ENCODE measurements at regions of chr14 and their contacts with region 1.

Region 1: DNA sequence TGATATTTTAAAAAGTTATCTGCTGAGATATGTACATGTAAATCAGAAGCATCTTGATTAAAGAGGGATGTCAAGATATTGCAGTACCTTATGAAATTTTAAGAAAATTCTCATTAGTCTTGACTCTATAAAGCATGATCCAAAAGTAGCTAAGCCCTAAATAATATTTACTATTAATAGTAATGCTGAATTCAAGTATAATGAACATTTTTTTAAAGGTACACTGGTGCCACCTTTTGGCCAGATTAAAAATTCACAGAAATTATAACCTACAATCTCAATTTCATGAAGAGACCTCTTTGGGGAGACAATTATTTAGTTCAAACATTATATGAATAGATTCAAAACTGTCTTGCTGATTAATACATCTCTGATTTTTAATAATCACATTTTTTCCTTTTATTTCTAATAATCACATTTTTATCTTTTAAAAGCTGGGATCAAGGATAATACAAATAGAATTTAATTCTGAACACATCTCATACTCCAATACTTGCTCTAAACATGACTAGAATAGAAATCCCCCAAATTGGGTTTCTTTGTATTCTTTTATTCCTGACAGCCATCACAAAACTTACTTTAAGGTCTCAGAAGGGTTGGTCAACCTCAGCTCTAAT is 13.4 kb downstream of the AKAP5 start:
- DNase-seq: peak in 5 of 9 donors; percentile 18 to 38 (median 32)
- ATAC-seq: peak; percentile 51
- H3K4me3 ChIP-seq: no peak overlapping the region
- H3K4me3 Mint-ChIP-seq: no peak overlapping the region
- H3K27ac ChIP-seq: no peak overlapping the region
- H3K27ac Mint-ChIP-seq: peak overlapping the region in 1 of 9 donors; percentile 55
- H3K4me1 ChIP-seq: no peaks in the 10 kb centered on the region
- H3K4me1 Mint-ChIP-seq: peaks cover 0 to 22% (median 9%) of the 10 kb centered on the region in 7 donors
- H3K27me3 ChIP-seq: no peaks in the 10 kb centered on the region
- H3K27me3 Mint-ChIP-seq: no peaks in the 10 kb centered on the region

Region 2: GRCh38 chr14:64303471-64303917 is 175.2 kb before region 1 on chr14:
- CTCF ChIA-PET with region 1: interaction called, 4 read pairs
- POLR2A ChIA-PET with region 1: no interaction called
- intact Hi-C with region 1: loop called in 1 of 2 experiments (anchors 1 kb)
- DNase-seq: peak in 6 of 9 donors; percentile 10 to 58 (median 48)
- ATAC-seq: peak; percentile 79
- H3K4me3 ChIP-seq: no peak overlapping the region
- H3K4me3 Mint-ChIP-seq: no peak overlapping the region
- H3K27ac ChIP-seq: no peak overlapping the region
- H3K27ac Mint-ChIP-seq: no peak overlapping the region
- H3K4me1 ChIP-seq: no peaks in the 10 kb centered on the region
- H3K4me1 Mint-ChIP-seq: peaks cover 0 to 6% (median 3%) of the 10 kb centered on the region in 7 donors
- H3K27me3 ChIP-seq: no peaks in the 10 kb centered on the region
- H3K27me3 Mint-ChIP-seq: peaks cover 0 to 10% (median 4%) of the 10 kb centered on the region in 5 donors

Region 3: DNA sequence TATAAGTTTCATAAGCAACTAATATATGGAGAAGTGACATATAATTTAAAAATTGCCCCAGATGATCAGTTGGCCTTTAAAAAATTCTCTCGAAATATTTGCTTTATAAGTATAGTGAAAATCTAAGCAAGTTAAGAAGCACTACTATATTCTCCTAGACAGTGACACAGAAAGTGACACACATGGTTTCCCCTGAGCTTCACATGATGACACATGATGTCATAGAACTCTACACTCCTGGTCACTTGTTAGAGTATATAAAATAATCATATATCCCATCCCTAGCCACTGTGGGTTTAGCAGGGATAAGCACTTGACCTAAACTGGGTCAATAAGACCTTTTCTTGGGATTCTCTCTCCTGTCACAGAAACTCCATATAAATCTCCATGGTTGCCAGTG is 133.2 kb before region 1 on chr14:
- CTCF ChIA-PET with region 1: interaction called, 12 read pairs
- POLR2A ChIA-PET with region 1: no interaction called
- intact Hi-C with region 1: loop called (anchors 1 kb)
- DNase-seq: no peak
- ATAC-seq: no peak
- H3K4me3 ChIP-seq: no peak overlapping the region
- H3K4me3 Mint-ChIP-seq: no peak overlapping the region
- H3K27ac ChIP-seq: no peak overlapping the region
- H3K27ac Mint-ChIP-seq: no peak overlapping the region
- H3K4me1 ChIP-seq: no peaks in the 10 kb centered on the region
- H3K4me1 Mint-ChIP-seq: peaks cover 0 to 5% (median 0%) of the 10 kb centered on the region in 7 donors
- H3K27me3 ChIP-seq: no peaks in the 10 kb centered on the region
- H3K27me3 Mint-ChIP-seq: no peaks in the 10 kb centered on the region

Region 4: DNA sequence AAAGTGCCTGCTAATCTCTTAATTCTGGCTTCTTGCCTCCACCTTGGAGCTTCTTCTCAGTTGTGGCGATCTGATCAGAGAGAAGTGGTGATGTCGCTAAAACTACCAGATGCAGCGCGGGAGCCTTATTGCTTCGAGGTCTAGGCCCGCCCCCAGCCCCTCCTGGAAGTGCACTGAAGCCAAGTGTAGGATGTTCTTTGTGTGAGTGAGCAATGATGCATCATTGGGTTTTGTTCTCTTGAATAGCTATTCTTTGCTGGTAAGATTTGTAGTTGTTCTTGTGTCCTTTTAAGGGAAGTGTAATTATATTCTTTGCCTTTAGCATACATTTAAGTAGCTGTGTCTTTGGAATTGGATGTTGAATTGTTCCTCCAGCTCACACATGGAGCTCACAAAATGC is 54.8 kb before region 1 on chr14:
- CTCF ChIA-PET with region 1: interaction called, 18 read pairs
- POLR2A ChIA-PET with region 1: no interaction called
- intact Hi-C with region 1: no loop called
- DNase-seq: no peak
- ATAC-seq: no peak
- H3K4me3 ChIP-seq: no peak overlapping the region
- H3K4me3 Mint-ChIP-seq: no peak overlapping the region
- H3K27ac ChIP-seq: no peak overlapping the region
- H3K27ac Mint-ChIP-seq: no peak overlapping the region
- H3K4me1 ChIP-seq: no peaks in the 10 kb centered on the region
- H3K4me1 Mint-ChIP-seq: peaks cover 0 to 4% (median 0%) of the 10 kb centered on the region in 7 donors
- H3K27me3 ChIP-seq: no peaks in the 10 kb centered on the region
- H3K27me3 Mint-ChIP-seq: no peaks in the 10 kb centered on the region

Region 5: GRCh38 chr14:64434528-64434927 is 44.2 kb before region 1 on chr14:
- CTCF ChIA-PET with region 1: interaction called, 18 read pairs
- POLR2A ChIA-PET with region 1: interaction called, 3 read pairs
- intact Hi-C with region 1: loop called in 1 of 2 experiments (anchors 1 kb)
- DNase-seq: no peak
- ATAC-seq: no peak
- H3K4me3 ChIP-seq: no peak overlapping the region
- H3K4me3 Mint-ChIP-seq: no peak overlapping the region
- H3K27ac ChIP-seq: no peak overlapping the region
- H3K27ac Mint-ChIP-seq: no peak overlapping the region
- H3K4me1 ChIP-seq: no peaks in the 10 kb centered on the region
- H3K4me1 Mint-ChIP-seq: peaks cover 0 to 18% (median 0%) of the 10 kb centered on the region in 7 donors
- H3K27me3 ChIP-seq: no peaks in the 10 kb centered on the region
- H3K27me3 Mint-ChIP-seq: no peaks in the 10 kb centered on the region

Region 6: DNA sequence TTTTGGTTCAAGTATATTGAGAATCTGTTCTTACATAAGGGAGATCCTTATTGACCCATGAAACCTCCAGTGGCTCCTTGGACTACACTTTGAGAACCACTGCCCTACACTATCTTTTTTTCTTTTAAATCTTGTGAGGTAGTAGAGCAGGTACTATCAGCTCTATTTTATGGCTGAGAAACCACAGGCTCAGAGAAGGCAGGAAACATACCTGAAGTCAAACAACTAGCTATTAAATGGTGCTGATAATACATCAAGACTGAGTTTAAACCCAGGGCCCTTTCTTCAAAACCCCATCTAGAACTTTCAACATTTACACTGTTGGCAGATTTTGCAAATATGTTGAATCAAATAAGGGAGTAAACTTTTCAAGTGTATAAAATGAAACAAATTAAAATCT is 18.0 kb after region 1 on chr14:
- CTCF ChIA-PET with region 1: interaction called, 13 read pairs
- POLR2A ChIA-PET with region 1: interaction called, 157 read pairs
- intact Hi-C with region 1: no loop called
- DNase-seq: peak in 1 of 9 donors; percentile 17
- ATAC-seq: no peak
- H3K4me3 ChIP-seq: no peak overlapping the region
- H3K4me3 Mint-ChIP-seq: peak overlapping the region in 8 of 10 donors; percentile 37 to 77 (median 66)
- H3K27ac ChIP-seq: peak overlapping the region; percentile 4
- H3K27ac Mint-ChIP-seq: peak overlapping the region in 8 of 9 donors; percentile 43 to 86 (median 77)
- H3K4me1 ChIP-seq: peaks cover 31 to 57% of the 10 kb centered on the region in 2 donors
- H3K4me1 Mint-ChIP-seq: peaks cover 59 to 88% (median 71%) of the 10 kb centered on the region in 7 donors
- H3K27me3 ChIP-seq: no peaks in the 10 kb centered on the region
- H3K27me3 Mint-ChIP-seq: no peaks in the 10 kb centered on the region

Region 7: DNA sequence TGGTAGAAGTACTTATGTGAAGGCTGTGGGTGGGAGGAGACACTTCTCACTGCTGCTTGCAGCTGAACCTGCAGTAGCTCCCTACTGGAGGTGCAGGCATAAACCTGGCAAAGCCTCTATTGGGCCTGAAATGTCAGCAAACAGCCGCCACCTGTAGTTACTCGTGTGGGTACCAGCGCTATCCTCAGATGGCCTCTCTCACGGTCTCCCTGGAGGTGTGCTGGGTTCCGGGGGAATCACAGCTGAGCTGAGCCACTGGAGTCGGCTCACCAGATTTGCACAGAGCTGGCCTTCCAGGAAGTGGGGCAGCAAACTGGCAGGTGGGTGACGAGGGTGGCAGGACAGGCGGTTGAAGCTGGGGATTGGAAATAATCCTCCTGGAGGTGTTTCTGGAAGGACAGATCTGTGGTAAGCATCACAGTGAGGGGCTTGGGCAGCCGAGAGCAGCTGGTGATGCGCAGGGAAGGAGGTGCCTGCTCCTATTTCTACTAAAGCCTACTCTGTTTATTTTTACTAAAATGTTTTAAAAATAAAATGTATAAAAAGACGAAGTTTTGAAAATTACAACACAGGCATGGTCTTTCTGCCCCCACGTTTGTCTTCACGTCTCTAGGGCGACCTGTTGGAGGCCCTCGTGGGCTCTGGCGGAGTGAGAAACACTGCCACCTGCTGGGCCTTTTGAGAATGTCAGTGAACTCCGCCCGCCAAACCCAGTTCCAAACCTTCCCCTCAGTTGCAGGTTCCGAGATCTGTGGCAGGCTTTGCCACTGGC is 157.7 kb after region 1 on chr14:
- CTCF ChIA-PET with region 1: interaction called, 5 read pairs
- POLR2A ChIA-PET with region 1: no interaction called
- intact Hi-C with region 1: loop called in 1 of 2 experiments (anchors 2 kb)
- DNase-seq: peak; percentile 37 to 73 (median 61)
- ATAC-seq: peak; percentile 90
- H3K4me3 ChIP-seq: no peak overlapping the region
- H3K4me3 Mint-ChIP-seq: no peak overlapping the region
- H3K27ac ChIP-seq: no peak overlapping the region
- H3K27ac Mint-ChIP-seq: peak overlapping the region in 1 of 9 donors; percentile 20
- H3K4me1 ChIP-seq: no peaks in the 10 kb centered on the region
- H3K4me1 Mint-ChIP-seq: peaks cover 0 to 7% (median 0%) of the 10 kb centered on the region in 7 donors
- H3K27me3 ChIP-seq: no peaks in the 10 kb centered on the region
- H3K27me3 Mint-ChIP-seq: peaks cover 0 to 17% (median 5%) of the 10 kb centered on the region in 5 donors

Measured in naive thymus-derived CD4-positive, alpha-beta T cell (primary cell).